OCI-LY7 (cell line): ENCODE measurements at regions of chr22 and their contacts with region 1.

Region 1: GRCh38 chr22:25777870-25778269 is 35.9 kb downstream of the MYO18B start:
- DNase-seq: peak; percentile 48
- H3K4me3 ChIP-seq: no peak overlapping the region
- H3K27ac ChIP-seq: no peak overlapping the region
- H3K4me1 ChIP-seq: no peaks in the 10 kb centered on the region
- CTCF ChIP-seq: peak; percentile 66

Region 2: DNA sequence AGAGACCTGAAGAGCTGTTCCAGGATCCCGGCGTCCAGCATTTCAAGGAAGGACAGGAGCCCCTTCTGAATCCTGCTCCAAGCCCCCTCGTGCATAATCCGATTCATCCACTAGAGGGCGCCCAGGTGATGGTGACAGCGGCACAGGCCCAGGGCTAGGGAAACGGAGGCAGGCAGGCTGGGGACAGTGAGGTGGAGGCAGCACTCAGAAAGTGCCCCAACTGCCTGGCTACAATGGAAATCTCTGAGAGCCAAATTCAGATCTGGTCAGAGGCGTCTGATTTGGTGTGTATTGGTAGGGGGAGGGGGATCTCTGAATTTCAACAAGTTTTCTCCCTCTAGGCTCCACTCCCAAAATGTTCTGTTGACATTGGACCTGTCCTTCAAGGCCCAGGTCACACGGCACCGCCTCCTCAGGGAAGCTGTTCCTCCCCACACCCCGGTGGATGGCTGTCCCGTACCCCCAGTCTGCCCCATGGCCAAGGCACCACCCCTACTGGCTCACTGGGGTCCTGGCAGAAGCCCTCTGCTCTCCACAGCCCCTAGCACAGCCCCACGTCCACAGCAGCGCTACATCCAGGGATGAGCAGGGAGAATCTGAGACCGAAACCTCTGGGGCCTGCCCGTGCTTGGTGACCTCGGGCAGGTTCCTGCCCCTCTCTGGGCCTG is 415.5 kb before region 1 on chr22:
- CTCF ChIA-PET with region 1: no interaction called
- POLR2A ChIA-PET with region 1: no interaction called
- intact Hi-C with region 1: loop called (anchors 10 kb)
- DNase-seq: peak; percentile 66
- H3K4me3 ChIP-seq: no peak overlapping the region
- H3K27ac ChIP-seq: no peak overlapping the region
- H3K4me1 ChIP-seq: no peaks in the 10 kb centered on the region
- CTCF ChIP-seq: peak; percentile 93

Region 3: GRCh38 chr22:25447686-25448434 is 330.0 kb before region 1 on chr22:
- CTCF ChIA-PET with region 1: no interaction called
- POLR2A ChIA-PET with region 1: no interaction called
- intact Hi-C with region 1: loop called (anchors 5 kb)
- DNase-seq: peak; percentile 92
- H3K4me3 ChIP-seq: peak overlapping the region; percentile 80
- H3K27ac ChIP-seq: peak overlapping the region; percentile 51
- H3K4me1 ChIP-seq: peaks cover 31% of the 10 kb centered on the region
- CTCF ChIP-seq: peak; percentile 83

Region 4: DNA sequence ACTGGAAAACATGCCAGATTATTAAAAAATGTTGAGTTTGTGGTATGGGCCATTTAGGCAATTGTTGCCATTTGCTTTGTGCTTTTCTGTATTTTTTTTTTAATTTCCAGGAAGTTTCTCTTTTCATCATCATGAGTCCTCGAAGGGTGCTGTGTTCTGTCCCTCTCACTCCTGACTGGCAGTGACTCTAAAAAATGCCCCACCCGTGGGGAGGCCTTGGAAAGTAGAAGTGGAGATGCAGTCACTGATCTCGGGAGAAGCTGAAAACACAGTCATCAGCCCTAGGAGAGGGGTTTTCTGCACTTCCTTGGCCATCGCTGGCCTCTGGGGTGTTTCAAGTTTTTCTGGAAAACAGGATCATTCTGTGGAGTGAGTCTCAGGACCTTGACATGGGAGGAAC is 311.9 kb before region 1 on chr22:
- CTCF ChIA-PET with region 1: interaction called, 3 read pairs
- POLR2A ChIA-PET with region 1: no interaction called
- intact Hi-C with region 1: loop called (anchors 1 kb)
- DNase-seq: no peak
- H3K4me3 ChIP-seq: no peak overlapping the region
- H3K27ac ChIP-seq: no peak overlapping the region
- H3K4me1 ChIP-seq: no peaks in the 10 kb centered on the region
- CTCF ChIP-seq: no peak

Region 5: GRCh38 chr22:25754527-25755202 is 23.2 kb before region 1 on chr22:
- CTCF ChIA-PET with region 1: no interaction called
- POLR2A ChIA-PET with region 1: no interaction called
- intact Hi-C with region 1: no loop called
- DNase-seq: no peak
- H3K4me3 ChIP-seq: no peak overlapping the region
- H3K27ac ChIP-seq: no peak overlapping the region
- H3K4me1 ChIP-seq: no peaks in the 10 kb centered on the region
- CTCF ChIP-seq: no peak

Region 6: GRCh38 chr22:26330966-26331625 is 553.2 kb after region 1 on chr22:
- CTCF ChIA-PET with region 1: no interaction called
- POLR2A ChIA-PET with region 1: no interaction called
- intact Hi-C with region 1: loop called (anchors 10 kb)
- DNase-seq: peak; percentile 68
- H3K4me3 ChIP-seq: no peak overlapping the region
- H3K27ac ChIP-seq: no peak overlapping the region
- H3K4me1 ChIP-seq: no peaks in the 10 kb centered on the region
- CTCF ChIP-seq: peak; percentile 98